ENCODE measurements at regions of chr20 and their contacts with region 1.

Region 1: GRCh38 chr20:64038565-64039292 is 2.7 kb downstream of the C20orf204 start:
- DNase-seq: peak; percentile 73
- H3K4me3 Mint-ChIP-seq: peak overlapping the region; percentile 66
- H3K27ac Mint-ChIP-seq: no peak overlapping the region
- H3K4me1 Mint-ChIP-seq: peaks cover 38% of the 10 kb centered on the region
- H3K27me3 Mint-ChIP-seq: no peaks in the 10 kb centered on the region

Region 2: DNA sequence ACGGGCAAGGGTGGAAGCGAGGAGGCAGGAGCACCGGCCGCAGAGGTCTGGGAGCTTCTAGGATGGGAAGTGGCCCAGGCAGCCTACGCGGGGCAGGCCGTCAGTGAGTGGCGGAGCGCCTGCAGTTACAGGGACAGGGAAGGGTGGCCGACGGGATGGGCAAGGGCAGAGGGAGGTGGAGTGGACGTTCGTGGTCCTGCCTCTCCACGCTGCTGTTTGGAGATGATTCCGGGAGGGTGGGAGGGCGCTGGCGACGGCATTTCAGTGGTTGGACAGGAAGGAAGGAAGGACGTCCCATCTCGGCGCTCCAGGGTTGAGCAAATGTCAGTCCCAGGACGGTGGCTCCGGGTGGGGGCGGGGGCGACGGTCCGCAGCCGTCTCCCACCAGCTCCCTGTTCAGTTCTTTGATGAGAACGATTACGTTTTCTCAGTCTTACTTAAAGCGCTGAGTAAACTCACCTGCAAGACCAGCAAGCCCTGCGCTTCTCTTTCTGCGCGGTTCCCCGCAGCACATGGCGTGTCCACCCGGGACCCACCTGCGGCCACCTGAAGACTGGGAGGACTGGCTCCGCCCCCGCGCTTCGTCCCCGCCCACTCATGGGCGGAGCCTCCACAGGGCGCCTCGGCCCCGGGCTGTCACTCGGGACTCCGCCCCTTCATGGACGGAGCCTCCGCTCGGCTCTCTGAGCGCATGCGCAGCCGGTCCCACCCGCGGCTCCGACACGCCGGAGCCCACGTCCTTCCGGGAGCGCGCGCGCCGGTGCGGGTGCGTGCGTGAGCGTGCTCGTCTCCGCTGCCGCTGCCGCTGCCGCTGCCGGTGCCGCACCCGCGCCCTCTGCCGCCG is 144.1 kb before region 1 on chr20 and contains the start of gene DNAJC5:
- intact Hi-C with region 1: loop called (anchors 10 kb)
- DNase-seq: peak; percentile 95
- H3K4me3 Mint-ChIP-seq: peak within 1 kb of the TSS; percentile 97
- H3K27ac Mint-ChIP-seq: peak within 1 kb of the TSS; percentile 94
- H3K4me1 Mint-ChIP-seq: peaks cover 36% of the 10 kb centered on the region
- H3K27me3 Mint-ChIP-seq: no peaks in the 10 kb centered on the region
- total RNA-seq, gene DNAJC5: 38.1 and 40.0 TPM in 2 replicates

Region 3: DNA sequence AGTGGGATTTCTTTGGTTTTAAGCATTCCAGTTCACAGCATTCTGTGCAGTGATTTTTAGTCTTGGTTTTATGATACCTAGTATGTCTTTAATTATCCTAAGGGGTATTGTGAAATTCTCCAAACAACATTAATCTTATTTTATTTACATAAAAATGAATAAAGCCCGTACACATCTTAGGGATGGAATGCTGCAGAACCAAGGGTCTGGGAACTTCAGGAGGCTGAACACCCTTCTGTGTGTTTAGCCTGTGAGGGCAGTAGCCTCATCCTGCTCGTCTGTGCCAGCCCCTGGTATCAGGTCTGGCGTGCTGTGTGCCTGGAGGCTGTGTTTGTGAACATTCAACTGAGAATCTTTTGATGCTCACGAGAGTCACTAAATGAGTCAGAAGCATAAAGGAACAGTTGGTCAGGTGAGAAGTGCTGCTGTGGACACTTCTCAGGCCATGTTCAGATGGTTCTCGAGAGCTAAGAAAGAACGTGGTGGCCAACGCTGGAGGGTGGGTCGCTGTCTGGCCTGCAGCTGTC is 28.0 kb before region 1 on chr20:
- intact Hi-C with region 1: no loop called
- DNase-seq: no peak
- H3K4me3 Mint-ChIP-seq: no peak overlapping the region
- H3K27ac Mint-ChIP-seq: peak overlapping the region; percentile 65
- H3K4me1 Mint-ChIP-seq: peaks cover 28% of the 10 kb centered on the region
- H3K27me3 Mint-ChIP-seq: no peaks in the 10 kb centered on the region